Caco-2 (cell line): ENCODE measurements at regions of chr6 and their contacts with region 1.

Region 1: DNA sequence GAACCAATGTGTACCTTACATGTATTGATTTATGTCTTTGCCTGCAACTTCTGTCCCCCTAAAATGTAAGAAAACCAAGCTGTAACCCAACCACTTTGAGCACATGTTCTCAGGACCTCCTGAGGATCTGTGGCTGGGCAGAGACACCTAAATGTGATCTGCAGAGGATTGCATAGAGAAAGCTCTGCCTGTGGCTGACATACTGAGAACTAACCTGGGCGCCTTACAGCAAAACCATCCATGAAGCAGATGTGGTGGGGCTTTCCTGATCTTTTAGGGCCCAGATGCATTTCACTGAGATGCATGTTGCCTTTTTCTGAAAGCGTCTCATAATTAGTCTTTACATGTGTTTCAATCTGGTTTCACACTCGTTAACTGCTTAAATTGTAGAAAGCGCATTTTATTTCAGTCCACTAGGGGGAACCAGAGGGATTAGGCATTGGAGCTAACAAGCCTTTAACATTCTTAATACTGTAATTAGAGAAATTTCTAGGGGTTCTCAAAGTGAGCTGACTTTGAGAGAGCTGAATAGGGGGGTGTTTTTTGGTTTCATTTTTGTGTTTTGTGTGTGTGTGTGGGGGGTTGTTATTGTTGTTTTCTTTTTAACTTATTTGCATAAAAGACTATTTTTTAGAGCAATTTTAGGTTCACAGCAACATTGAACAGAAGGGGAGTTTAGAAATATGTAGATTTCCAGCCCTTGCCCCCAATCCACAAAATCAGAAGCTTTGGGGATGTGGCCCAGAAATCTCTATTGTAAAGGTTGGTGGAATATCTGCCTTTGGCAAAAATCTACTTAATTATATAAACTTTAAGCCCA is 50.9 kb upstream of the FAM184A start:
- DNase-seq: peak in 1 of 2 experiments; percentile 66
- H3K4me3 ChIP-seq: no peak overlapping the region
- H3K4me3 Mint-ChIP-seq: peak overlapping the region; percentile 43
- H3K27ac Mint-ChIP-seq: peak overlapping the region; percentile 33
- H3K4me1 ChIP-seq: peaks cover 35% of the 10 kb centered on the region
- H3K4me1 Mint-ChIP-seq: peaks cover 34% of the 10 kb centered on the region
- H3K27me3 ChIP-seq: no peaks in the 10 kb centered on the region
- H3K27me3 Mint-ChIP-seq: no peaks in the 10 kb centered on the region
- CTCF ChIP-seq: peak; percentile 51 to 54

Region 2: DNA sequence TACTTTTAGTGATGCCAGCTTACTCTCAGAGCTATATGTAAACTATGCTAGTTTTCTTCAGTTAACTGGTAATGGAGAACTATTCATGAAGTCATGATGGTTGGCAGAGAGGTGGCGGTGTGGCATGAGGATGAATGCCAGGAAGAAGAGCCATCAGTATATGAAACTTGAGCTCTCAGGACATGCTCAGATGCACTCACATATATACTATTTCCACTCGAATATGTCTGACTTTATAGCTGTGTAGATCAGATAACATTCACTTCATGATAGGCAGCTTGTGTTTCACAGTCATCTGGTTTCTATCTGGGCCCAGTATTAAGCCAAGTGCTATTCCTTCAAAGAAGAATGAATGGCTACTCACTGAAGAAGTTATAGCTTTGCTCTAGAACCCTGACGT is 431.8 kb before region 1 on chr6:
- CTCF ChIA-PET with region 1: interaction called, 10 read pairs
- POLR2A ChIA-PET with region 1: no interaction called
- intact Hi-C with region 1: no loop called
- DNase-seq: no peak
- H3K4me3 ChIP-seq: no peak overlapping the region
- H3K4me3 Mint-ChIP-seq: no peak overlapping the region
- H3K27ac Mint-ChIP-seq: no peak overlapping the region
- H3K4me1 ChIP-seq: no peaks in the 10 kb centered on the region
- H3K4me1 Mint-ChIP-seq: no peaks in the 10 kb centered on the region
- H3K27me3 ChIP-seq: no peaks in the 10 kb centered on the region
- H3K27me3 Mint-ChIP-seq: no peaks in the 10 kb centered on the region
- CTCF ChIP-seq: no peak

Region 3: DNA sequence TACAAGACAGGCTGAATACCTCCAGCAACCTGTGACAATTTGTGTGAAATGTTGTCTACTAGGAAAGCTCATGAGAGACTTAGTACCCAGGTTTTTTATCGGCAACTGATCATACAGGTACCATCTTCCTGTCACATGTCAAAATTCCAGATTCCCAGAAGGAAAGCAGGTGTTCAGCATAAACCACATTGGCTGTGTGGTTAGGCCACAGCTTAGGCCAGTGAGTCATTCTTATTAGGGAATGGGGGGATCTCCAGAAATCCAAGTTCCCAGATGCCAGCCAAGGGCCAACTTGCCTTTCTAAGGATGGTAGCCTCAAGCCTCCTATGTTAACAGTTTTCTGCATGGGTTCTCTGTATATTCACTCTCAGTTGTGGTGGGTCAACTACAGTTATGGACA is 116.8 kb before region 1 on chr6:
- CTCF ChIA-PET with region 1: no interaction called
- POLR2A ChIA-PET with region 1: no interaction called
- intact Hi-C with region 1: no loop called
- DNase-seq: no peak
- H3K4me3 ChIP-seq: no peak overlapping the region
- H3K4me3 Mint-ChIP-seq: no peak overlapping the region
- H3K27ac Mint-ChIP-seq: no peak overlapping the region
- H3K4me1 ChIP-seq: no peaks in the 10 kb centered on the region
- H3K4me1 Mint-ChIP-seq: no peaks in the 10 kb centered on the region
- H3K27me3 ChIP-seq: no peaks in the 10 kb centered on the region
- H3K27me3 Mint-ChIP-seq: no peaks in the 10 kb centered on the region
- CTCF ChIP-seq: no peak

Region 4: DNA sequence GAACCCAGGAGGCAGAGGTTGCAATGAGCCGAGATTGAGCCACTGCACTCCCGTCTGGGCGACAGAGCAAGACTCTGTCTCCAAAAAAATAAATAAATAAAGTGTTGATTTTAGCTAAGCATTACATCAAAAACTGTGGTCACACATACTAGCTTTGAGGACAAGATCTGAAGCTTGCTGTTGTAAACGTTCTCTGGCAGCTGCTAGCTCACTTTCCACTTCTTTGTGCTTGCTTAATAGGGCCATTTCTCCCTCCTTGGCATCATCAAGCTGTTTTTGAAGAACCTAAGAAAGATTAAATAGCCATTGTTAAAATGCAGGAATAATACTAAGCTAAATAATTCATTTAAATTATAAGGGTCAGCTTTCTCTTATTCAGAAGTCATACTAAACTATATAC is 106.6 kb before region 1 on chr6:
- CTCF ChIA-PET with region 1: no interaction called
- POLR2A ChIA-PET with region 1: no interaction called
- intact Hi-C with region 1: no loop called
- DNase-seq: no peak
- H3K4me3 ChIP-seq: no peak overlapping the region
- H3K4me3 Mint-ChIP-seq: no peak overlapping the region
- H3K27ac Mint-ChIP-seq: no peak overlapping the region
- H3K4me1 ChIP-seq: peaks cover 16% of the 10 kb centered on the region
- H3K4me1 Mint-ChIP-seq: peaks cover 25% of the 10 kb centered on the region
- H3K27me3 ChIP-seq: no peaks in the 10 kb centered on the region
- H3K27me3 Mint-ChIP-seq: no peaks in the 10 kb centered on the region
- CTCF ChIP-seq: no peak